Activated B cell treated with CpG ODN at 0.5 μM for 24 hours (primary cell): ENCODE measurements at regions of chr22 and their contacts with region 1.

Region 1: DNA sequence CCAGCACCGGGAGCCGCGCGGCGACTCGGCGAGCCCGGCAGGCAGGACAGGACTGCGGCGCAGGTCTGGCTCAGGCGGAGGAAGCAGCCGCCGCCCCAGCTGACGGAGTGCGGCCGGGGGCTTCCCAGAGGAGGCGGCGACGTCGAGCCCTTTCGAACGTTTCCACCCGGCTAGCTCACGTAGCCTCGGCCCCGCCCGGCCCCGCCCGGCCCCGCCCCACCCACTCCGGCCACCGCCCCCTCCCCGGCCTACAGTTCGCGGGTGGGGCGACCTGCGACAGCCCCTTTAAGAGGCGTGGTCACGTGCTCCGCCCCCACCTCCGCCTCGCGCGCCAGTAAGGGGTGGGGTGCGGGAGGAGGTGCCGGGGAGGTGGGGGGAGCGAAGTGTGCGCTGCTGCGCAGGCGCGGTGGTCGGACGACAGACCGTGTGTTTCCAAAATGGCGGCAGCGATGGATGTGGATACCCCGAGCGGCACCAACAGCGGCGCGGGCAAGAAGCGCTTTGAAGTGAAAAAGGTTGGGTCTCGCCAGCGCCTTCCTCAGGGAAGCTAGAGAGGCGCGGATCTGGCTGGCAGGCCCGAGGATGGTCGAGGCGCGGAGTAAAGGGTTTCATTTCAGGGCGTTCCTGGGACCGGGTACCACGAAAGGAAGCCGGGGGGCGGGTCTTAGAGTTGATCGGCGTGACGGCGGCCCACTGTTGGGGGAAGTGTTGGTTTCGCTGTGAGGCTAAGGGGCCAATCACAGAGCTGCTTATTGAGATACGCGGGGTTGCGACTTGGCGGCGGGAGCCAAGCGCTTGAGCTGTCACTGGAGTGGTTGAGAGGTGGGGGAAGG is at the start of gene RBX1:
- DNase-seq: peak; percentile 96
- ATAC-seq: peak; percentile 83
- H3K4me3 Mint-ChIP-seq: peak within 1 kb of the TSS; percentile 100
- H3K27ac Mint-ChIP-seq: peak within 1 kb of the TSS; percentile 100
- H3K4me1 Mint-ChIP-seq: peaks cover 30% of the 10 kb centered on the region
- H3K27me3 Mint-ChIP-seq: no peaks in the 10 kb centered on the region
- CTCF ChIP-seq: no peak
- total RNA-seq, gene RBX1: 78.6 and 78.9 TPM in 2 replicates

Region 2: DNA sequence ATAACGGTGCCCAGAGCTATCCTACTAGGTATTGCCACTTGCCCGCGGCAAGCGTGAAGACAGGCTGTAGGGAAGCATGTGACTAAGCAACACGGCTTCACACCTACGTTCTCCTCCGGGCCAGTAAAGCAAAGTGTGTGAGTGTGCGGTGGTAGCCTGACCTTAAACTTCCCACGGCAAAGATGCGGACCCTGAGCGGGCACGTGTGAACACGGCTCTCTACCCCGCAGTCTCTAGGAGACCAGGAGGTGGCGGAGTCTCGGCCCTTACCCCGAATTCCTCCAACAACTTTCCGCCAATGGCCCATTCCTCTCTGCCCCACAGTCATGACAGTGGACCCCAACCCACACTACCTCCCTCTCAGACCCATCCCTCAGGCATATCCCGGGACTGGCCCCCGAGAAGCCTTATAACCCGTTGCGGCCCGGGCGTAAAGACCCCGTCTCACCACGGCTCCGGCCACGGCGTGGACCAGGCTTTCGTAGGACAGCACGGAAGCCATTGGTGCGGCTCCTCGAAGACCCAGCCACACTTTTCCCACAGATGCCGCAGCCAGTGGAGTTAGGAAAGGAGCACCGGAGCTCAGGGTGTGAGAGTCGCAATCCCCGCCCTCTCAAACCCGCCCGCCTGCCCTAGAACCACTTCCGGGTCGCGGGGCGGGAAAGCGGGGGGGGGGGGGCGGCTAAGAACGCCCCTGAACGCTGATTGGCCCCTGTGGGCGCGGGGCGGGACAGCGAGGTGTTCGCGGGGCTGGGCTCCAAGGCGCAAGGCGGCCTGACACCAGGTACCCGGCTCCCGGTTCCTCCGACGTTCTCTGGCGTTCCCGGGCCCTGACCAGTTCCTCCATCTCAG is 132.2 kb before region 1 on chr22 and contains the start of gene SLC25A17:
- CTCF ChIA-PET with region 1: no interaction called
- POLR2A ChIA-PET with region 1: no interaction called
- intact Hi-C with region 1: loop called (anchors 1 kb)
- DNase-seq: peak; percentile 78
- ATAC-seq: peak; percentile 93
- H3K4me3 Mint-ChIP-seq: peak within 1 kb of the TSS; percentile 98
- H3K27ac Mint-ChIP-seq: peak within 1 kb of the TSS; percentile 92
- H3K4me1 Mint-ChIP-seq: peaks cover 36% of the 10 kb centered on the region
- H3K27me3 Mint-ChIP-seq: no peaks in the 10 kb centered on the region
- CTCF ChIP-seq: no peak
- total RNA-seq, gene SLC25A17: 14.8 and 19.3 TPM in 2 replicates

Region 3: GRCh38 chr22:40939202-40939601 is 12.0 kb before region 1 on chr22:
- CTCF ChIA-PET with region 1: no interaction called
- POLR2A ChIA-PET with region 1: interaction called, 21 read pairs
- intact Hi-C with region 1: loop called (anchors 1 kb)
- DNase-seq: no peak
- ATAC-seq: peak; percentile 9
- H3K4me3 Mint-ChIP-seq: peak overlapping the region; percentile 13
- H3K27ac Mint-ChIP-seq: peak overlapping the region; percentile 16
- H3K4me1 Mint-ChIP-seq: peaks cover 40% of the 10 kb centered on the region
- H3K27me3 Mint-ChIP-seq: no peaks in the 10 kb centered on the region
- CTCF ChIP-seq: no peak

Region 4: DNA sequence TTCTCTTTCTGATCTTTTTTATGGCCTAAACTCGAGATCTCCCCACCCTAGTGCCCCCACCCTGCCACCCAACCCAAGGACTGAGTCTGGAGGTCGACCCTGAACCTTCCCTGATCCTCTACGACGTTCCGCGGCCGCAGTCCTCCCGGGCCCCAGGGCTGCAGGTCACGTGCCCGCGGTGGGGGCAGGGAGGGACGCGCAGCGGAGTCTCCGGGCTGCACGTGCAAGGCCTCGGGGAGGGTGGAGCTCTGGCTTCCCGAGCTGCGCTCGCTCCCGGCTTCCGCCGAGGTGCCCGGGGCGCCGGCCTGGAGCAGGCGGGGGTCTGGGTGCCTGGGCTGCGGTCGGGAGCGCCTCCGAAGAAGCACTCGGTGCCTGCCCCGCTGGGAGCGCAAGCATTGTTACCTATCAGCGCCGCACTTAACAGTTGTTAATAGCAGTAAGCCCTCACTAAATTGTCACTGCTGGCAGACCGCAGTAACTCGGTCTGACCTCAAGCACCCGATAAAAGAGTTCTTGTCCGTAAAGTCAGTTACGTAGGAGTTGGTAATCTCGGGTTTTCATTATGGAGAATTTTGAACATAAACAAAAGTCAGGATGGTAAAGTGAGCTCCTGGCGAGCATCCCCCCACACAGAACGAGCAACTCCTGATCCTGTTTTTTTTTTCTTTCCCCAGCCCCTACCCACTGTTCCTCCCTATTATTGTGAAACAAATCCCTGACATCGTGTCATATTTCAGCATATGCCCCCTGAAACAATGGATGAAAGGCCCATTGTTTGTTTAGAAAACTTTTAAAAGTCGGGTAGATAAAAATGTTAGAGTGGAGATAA is 71.5 kb after region 1 on chr22:
- CTCF ChIA-PET with region 1: no interaction called
- POLR2A ChIA-PET with region 1: interaction called, 75 read pairs
- intact Hi-C with region 1: loop called (anchors 1 kb)
- DNase-seq: peak; percentile 87
- ATAC-seq: peak; percentile 75
- H3K4me3 Mint-ChIP-seq: peak overlapping the region; percentile 85
- H3K27ac Mint-ChIP-seq: peak overlapping the region; percentile 87
- H3K4me1 Mint-ChIP-seq: peaks cover 19% of the 10 kb centered on the region
- H3K27me3 Mint-ChIP-seq: no peaks in the 10 kb centered on the region
- CTCF ChIP-seq: no peak

Region 5: DNA sequence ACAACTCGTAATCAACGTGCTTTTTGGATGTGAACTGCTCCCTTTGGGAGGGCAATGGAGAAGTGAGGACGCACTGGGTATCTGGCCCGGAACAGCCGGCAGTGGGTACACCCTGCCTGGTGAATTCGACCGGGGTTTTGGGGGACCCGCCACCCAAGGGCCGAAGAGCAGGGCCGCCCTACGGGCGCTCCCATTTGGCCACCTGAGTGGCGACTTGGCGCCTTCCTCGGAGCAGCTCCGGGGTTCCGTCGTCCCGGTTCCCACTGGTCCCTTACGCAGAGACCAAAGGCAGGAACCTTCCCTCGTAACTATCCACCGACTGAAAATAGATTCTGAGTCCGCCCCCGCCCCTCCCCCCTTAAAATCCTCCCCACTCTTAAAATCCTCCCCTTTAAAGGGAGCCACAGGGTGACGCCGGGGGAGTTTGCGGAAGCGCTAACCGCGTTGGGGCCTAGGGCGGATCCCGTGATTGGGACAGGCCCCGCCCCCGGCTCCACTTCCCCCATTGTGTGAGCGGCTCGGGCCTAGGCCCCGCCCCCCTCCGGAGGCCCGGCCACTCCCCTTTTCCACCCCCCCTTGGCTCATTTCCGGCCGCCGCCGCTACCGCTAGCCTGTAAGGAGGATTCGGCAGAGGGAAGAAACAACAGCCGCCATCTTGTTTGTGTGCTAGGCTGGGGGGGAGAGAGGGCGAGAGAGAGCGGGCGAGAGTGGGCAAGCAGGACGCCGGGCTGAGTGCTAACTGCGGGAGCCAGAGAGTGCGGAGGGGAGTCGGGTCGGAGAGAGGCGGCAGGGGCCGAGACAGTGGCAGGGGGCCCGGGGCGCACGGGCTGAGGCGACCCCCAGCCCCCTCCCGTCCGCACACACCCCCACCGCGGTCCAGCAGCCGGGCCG is 140.2 kb after region 1 on chr22:
- CTCF ChIA-PET with region 1: interaction called, 6 read pairs
- POLR2A ChIA-PET with region 1: interaction called, 245 read pairs
- intact Hi-C with region 1: loop called (anchors 1 kb)
- DNase-seq: peak; percentile 99
- ATAC-seq: peak; percentile 83
- H3K4me3 Mint-ChIP-seq: peak overlapping the region; percentile 98
- H3K27ac Mint-ChIP-seq: peak overlapping the region; percentile 99
- H3K4me1 Mint-ChIP-seq: peaks cover 33% of the 10 kb centered on the region
- H3K27me3 Mint-ChIP-seq: no peaks in the 10 kb centered on the region
- CTCF ChIP-seq: no peak

Region 6: DNA sequence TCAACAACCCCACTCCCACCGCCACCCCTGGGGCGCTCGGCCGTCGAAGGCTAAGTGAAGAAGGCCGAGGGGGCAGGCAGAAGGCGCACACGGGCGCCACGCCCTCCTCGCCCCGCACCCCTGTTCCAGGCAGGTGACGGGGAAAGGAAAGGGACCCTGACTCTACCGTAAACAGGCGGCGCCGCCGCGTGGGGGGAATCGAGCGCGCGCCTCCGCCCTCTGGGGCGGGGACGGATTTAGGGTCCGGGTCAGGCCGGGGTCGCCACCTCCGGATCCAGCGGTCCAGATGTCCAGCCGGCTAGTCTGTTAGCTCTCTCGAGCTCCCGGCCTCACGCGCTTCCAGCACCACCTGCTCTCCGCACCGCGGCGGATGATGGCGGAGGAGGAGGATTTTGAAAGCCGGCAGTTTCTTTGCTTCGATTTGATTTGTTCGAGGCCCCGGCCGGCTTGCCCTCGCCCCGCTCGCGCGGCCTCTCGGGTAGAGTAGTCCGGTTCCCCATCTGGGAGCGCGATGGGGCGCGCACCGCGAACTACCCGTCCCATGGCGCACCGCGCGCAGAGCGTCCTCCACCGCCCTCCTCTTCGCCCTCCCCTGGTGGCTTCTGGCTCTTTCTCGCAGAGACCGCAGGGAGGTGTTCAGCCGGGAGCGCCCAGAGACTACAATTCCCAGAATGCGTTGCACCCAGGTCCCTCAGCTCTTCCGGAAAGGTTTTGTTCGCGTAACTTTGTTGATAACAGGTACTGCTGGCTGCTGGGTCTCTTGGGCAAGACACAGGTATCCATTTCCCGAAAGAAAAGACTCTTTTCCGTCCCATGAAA is 334.9 kb after region 1 on chr22 and contains the start of gene RANGAP1:
- CTCF ChIA-PET with region 1: no interaction called
- POLR2A ChIA-PET with region 1: interaction called, 10 read pairs
- intact Hi-C with region 1: loop called (anchors 1 kb)
- DNase-seq: peak; percentile 93
- ATAC-seq: peak; percentile 97
- H3K4me3 Mint-ChIP-seq: peak within 1 kb of the TSS; percentile 94
- H3K27ac Mint-ChIP-seq: peak within 1 kb of the TSS; percentile 98
- H3K4me1 Mint-ChIP-seq: peaks cover 28% of the 10 kb centered on the region
- H3K27me3 Mint-ChIP-seq: no peaks in the 10 kb centered on the region
- CTCF ChIP-seq: no peak
- total RNA-seq, gene RANGAP1: 48.9 and 56.4 TPM in 2 replicates